Prostate gland (tissue), 2 donors: ENCODE measurements at regions of chr6 and their contacts with region 1.

Region 1: DNA sequence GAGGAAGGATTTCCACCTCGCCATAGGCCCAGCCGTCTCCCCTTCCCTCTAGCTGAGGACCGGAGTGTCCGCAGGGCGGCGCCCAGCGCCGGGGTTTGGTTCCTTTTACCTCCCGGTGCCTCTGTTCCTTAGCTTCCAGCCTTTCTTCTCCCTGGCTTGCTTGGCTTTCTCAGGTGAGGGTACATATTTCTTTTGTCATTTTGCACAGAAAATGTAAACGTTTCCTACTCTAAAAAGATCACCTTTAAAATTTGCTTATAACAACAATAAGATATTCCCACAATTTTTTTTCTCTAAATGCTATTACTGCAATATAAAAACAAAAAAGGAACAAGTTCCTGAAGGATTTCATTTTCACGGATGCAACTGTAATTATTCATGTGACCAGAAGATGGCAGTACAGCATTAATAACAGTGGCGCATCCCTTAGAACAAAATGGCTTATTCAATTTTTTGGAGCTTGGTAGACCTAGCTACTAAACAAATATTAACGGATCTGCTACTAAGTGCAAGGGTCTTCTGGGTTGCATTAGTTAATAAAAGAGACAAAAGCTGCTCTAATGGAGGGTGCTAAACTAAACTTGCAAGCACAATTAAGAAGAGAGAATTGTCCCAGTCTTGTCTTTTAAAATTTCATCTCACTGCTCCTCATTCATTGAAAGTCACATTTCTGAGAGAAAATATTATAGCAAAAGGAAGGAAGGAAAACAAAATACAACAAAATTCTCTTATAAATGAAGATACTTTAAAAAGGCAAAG is 172.9 kb downstream of the ADGRG6 start:
- DNase-seq: peak; percentile 6
- H3K4me3 ChIP-seq: no peak overlapping the region
- H3K27ac ChIP-seq: no peak overlapping the region
- H3K4me1 ChIP-seq: no peaks in the 10 kb centered on the region
- H3K27me3 ChIP-seq: no peaks in the 10 kb centered on the region
- CTCF ChIP-seq: peak; percentile 26 to 90 (median 82)
- POLR2A ChIP-seq: no peak

Region 2: DNA sequence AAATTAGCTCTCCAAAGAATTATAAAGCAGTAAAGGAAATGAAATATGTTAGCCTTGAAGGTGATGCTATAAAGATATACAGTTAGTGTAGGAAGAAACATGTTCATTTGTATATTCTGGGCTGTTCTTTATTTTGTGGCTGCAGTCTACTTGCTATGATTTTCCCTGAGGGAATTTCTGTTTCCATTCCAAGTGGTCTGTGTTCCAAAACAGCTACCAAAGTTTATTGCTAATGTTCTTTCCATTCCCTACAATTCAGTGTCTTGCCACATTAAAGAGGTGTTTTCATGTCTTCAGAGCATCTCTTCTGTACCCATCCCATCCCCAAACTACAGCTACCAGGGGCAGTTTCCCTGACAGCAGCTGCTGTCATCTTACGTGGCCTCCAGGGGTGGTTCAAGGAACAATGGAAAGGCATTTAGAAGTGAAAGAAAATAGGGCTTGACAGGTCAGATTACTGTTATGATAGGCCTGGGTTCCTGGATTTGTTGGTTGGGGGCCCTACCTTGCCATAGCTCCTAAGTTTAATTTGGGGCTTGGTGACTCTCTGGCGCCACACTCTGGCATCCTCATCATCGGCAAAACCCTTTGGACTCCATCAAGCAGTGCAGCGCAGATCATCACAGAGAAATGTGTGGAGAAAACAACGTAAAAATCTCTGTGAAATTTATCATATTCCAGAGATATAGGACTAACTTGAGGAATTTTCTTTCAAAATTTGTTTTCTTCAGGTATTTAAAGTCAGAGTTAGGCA is 552.2 kb after region 1 on chr6:
- intact Hi-C with region 1: loop called (anchors 10 kb)
- DNase-seq: peak; percentile 13
- H3K4me3 ChIP-seq: no peak overlapping the region
- H3K27ac ChIP-seq: no peak overlapping the region
- H3K4me1 ChIP-seq: no peaks in the 10 kb centered on the region
- H3K27me3 ChIP-seq: no peaks in the 10 kb centered on the region
- CTCF ChIP-seq: peak in 3 of 4 experiments; percentile 49 to 64 (median 50)
- POLR2A ChIP-seq: no peak

Region 3: GRCh38 chr6:143427109-143427817 is 952.6 kb after region 1 on chr6:
- intact Hi-C with region 1: loop called (anchors 10 kb)
- DNase-seq: peak; percentile 58
- H3K4me3 ChIP-seq: no peak overlapping the region
- H3K27ac ChIP-seq: no peak overlapping the region
- H3K4me1 ChIP-seq: no peaks in the 10 kb centered on the region
- H3K27me3 ChIP-seq: no peaks in the 10 kb centered on the region
- CTCF ChIP-seq: peak; percentile 60 to 87 (median 76)
- POLR2A ChIP-seq: no peak